AG04449 (cell line): ENCODE measurements at regions of chr11 and their contacts with region 1.

Region 1: GRCh38 chr11:75204685-75205563 is 35.6 kb upstream of the TPBGL start:
- DNase-seq: no peak
- H3K4me3 ChIP-seq: no peak overlapping the region
- CTCF ChIP-seq: peak; percentile 96

Region 2: GRCh38 chr11:74849525-74850391 is 355.2 kb before region 1 on chr11:
- CTCF ChIA-PET with region 1: no interaction called
- POLR2A ChIA-PET with region 1: no interaction called
- DNase-seq: no peak
- H3K4me3 ChIP-seq: no peak overlapping the region
- CTCF ChIP-seq: no peak

Region 3: GRCh38 chr11:74929431-74930363 is 275.2 kb before region 1 on chr11:
- CTCF ChIA-PET with region 1: interaction called, 102 read pairs
- POLR2A ChIA-PET with region 1: no interaction called
- DNase-seq: peak; percentile 74
- H3K4me3 ChIP-seq: no peak overlapping the region
- CTCF ChIP-seq: peak; percentile 76

Region 4: GRCh38 chr11:75022759-75023396 is 182.0 kb before region 1 on chr11:
- CTCF ChIA-PET with region 1: interaction called, 156 read pairs
- POLR2A ChIA-PET with region 1: interaction called, 4 read pairs
- DNase-seq: peak; percentile 28
- H3K4me3 ChIP-seq: no peak overlapping the region
- CTCF ChIP-seq: peak; percentile 96

Region 5: GRCh38 chr11:75167617-75168016 is 37.3 kb before region 1 on chr11:
- CTCF ChIA-PET with region 1: interaction called, 12 read pairs
- POLR2A ChIA-PET with region 1: no interaction called
- DNase-seq: no peak
- H3K4me3 ChIP-seq: no peak overlapping the region
- CTCF ChIP-seq: no peak

Region 6: GRCh38 chr11:75233742-75234172 is 28.8 kb after region 1 on chr11:
- CTCF ChIA-PET with region 1: interaction called, 252 read pairs
- POLR2A ChIA-PET with region 1: no interaction called
- DNase-seq: no peak
- H3K4me3 ChIP-seq: no peak overlapping the region
- CTCF ChIP-seq: no peak